Esophagus muscularis mucosa (tissue), 4 donors: ENCODE measurements at regions of chr11 and their contacts with region 1.

Region 1: GRCh38 chr11:12893787-12894672 is 115.1 kb upstream of the RASSF10 start:
- DNase-seq: no peak
- H3K4me3 ChIP-seq: no peak overlapping the region
- H3K27ac ChIP-seq: peak overlapping the region; percentile 20 to 69 (median 48)
- H3K4me1 ChIP-seq: peaks cover 20 to 78% (median 53%) of the 10 kb centered on the region in 4 donors
- H3K27me3 ChIP-seq: no peaks in the 10 kb centered on the region
- CTCF ChIP-seq: peak in 2 of 3 experiments; percentile 96 to 98
- EP300 ChIP-seq: no peak
- POLR2A ChIP-seq: no peak

Region 2: DNA sequence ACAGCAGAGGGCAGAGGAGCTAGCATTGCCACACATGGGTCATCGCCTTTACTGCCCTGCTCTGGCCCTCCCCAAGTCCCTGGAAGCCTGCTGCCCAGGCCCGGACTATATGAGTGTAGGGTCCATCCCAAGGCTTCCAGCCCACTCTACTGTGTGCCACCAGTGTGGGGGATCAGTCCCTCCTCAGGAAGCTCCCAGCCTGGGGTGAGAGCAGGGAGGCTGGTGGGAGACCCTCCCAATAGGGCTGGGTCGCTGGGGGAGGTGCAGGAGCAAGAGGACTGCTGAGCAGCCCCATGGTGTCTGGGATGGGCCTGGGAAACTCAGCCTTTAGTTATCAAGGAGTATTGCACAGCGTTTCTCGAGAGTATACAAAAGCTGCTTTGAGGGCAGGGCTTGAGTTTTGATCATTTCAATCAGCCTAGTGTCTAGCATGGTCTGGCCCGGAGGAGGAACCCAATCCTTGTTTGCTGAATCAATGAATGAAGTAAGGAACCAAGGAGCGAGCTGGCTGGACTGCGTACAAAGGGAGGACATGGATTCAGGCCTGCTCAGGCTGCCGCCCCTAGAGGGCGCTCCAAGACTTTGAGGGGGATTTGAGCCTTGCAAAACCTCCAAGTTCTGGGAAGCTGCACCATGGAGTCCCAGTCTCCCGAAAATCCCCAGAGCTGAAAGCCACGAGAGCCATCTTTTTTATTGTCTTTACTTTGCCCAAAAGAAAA is 605.7 kb before region 1 on chr11:
- intact Hi-C with region 1: loop called (anchors 2 kb)
- DNase-seq: peak; percentile 93
- H3K4me3 ChIP-seq: no peak overlapping the region
- H3K27ac ChIP-seq: peak overlapping the region; percentile 83 to 91 (median 90)
- H3K4me1 ChIP-seq: peaks cover 15 to 43% (median 40%) of the 10 kb centered on the region in 4 donors
- H3K27me3 ChIP-seq: no peaks in the 10 kb centered on the region
- CTCF ChIP-seq: peak; percentile 87 to 94 (median 93)
- EP300 ChIP-seq: no peak
- POLR2A ChIP-seq: no peak

Region 3: GRCh38 chr11:12331239-12331874 is 562.7 kb before region 1 on chr11:
- intact Hi-C with region 1: loop called (anchors 1 kb)
- DNase-seq: no peak
- H3K4me3 ChIP-seq: no peak overlapping the region
- H3K27ac ChIP-seq: peak overlapping the region; percentile 44 to 62 (median 54)
- H3K4me1 ChIP-seq: peaks cover 0 to 42% (median 39%) of the 10 kb centered on the region in 4 donors
- H3K27me3 ChIP-seq: no peaks in the 10 kb centered on the region
- CTCF ChIP-seq: peak; percentile 76 to 87 (median 83)
- EP300 ChIP-seq: no peak
- POLR2A ChIP-seq: no peak

Region 4: DNA sequence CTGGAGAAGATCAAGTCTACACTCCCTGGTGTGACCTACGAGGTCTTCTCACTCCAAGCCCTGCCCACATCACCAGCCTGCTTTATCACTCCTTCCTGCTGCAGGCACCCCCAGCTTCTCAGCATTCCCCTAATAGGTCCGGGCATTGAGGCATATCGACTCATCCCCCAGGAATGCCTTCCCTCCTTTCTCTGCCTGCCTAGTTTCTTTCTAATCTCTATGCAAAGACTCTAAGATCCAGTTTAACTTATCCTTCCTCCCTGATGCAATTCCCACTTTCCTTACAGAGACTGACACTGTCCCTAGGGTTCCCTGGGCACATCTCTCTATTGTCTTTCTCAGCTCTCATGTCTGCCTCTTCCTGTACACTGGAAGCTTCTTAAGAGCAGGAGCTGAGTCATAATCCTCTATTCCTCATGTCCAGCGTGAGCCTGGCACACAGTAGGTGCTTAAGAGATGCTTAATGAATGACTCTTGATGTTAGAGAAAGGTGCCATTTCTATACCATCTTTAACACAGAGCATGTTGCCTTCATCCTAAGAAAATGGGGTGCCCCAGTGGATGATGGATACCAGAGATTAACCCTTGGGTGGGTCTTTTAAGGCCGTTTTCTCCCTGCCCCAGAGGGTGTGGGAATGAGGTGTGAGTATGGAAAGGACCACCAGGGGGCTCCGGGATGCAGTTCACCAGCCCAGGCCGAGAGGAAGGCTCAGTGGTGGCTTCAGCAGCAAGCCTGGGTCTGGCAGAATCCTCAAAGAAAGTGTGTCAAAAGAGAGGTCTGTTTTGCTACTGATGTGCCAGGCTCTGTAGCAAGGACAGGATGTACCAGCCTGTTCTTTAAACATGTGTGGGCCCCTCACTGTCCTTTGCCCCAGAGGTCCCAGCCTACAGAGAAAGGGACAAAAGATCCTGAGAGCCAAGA is 482.0 kb before region 1 on chr11:
- intact Hi-C with region 1: loop called (anchors 5 kb)
- DNase-seq: peak; percentile 92
- H3K4me3 ChIP-seq: no peak overlapping the region
- H3K27ac ChIP-seq: peak overlapping the region; percentile 87 to 100 (median 98)
- H3K4me1 ChIP-seq: peaks cover 77 to 100% (median 99%) of the 10 kb centered on the region in 4 donors
- H3K27me3 ChIP-seq: no peaks in the 10 kb centered on the region
- CTCF ChIP-seq: peak; percentile 73 to 80 (median 80)
- EP300 ChIP-seq: peak; percentile 95
- POLR2A ChIP-seq: no peak

Region 5: DNA sequence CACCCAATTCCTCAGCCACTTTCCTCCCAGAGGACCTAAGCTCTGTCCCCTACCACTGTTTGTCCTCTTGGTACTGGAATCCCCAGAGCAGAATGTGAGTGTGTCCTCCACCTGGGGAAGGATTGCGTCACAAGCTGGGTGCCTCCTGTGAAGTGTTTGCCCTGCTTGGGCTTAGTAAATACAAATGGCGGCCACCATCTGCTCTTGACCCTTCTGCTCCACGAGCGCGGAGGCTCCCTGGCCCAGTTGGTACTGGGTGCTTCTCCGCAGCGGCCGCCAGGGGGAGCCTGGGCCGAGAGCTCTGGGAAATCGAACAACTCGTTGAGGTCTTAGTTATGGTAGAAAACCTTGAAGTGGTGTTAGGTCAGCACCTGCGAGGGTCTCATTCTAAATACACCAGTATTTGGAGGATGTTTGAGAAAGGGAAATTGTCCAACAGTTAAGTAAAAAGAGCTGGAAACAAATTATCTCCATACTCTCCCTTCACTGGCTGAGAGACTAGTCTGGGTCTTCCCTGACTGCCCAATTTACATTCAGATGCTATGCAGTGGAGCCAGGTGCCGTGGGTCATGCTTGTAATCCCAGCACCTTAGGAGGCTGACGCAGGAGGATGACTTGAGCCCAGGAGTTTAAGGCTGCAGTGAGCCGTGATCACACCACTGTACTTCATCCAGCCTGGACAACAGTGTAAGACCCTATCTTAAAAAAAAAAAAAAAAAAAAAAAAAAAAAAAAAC is 294.5 kb before region 1 on chr11:
- intact Hi-C with region 1: loop called (anchors 5 kb)
- DNase-seq: no peak
- H3K4me3 ChIP-seq: no peak overlapping the region
- H3K27ac ChIP-seq: no peak overlapping the region
- H3K4me1 ChIP-seq: peaks cover 0 to 6% (median 0%) of the 10 kb centered on the region in 4 donors
- H3K27me3 ChIP-seq: no peaks in the 10 kb centered on the region
- CTCF ChIP-seq: peak; percentile 59 to 79 (median 68)
- EP300 ChIP-seq: no peak
- POLR2A ChIP-seq: no peak

Region 6: DNA sequence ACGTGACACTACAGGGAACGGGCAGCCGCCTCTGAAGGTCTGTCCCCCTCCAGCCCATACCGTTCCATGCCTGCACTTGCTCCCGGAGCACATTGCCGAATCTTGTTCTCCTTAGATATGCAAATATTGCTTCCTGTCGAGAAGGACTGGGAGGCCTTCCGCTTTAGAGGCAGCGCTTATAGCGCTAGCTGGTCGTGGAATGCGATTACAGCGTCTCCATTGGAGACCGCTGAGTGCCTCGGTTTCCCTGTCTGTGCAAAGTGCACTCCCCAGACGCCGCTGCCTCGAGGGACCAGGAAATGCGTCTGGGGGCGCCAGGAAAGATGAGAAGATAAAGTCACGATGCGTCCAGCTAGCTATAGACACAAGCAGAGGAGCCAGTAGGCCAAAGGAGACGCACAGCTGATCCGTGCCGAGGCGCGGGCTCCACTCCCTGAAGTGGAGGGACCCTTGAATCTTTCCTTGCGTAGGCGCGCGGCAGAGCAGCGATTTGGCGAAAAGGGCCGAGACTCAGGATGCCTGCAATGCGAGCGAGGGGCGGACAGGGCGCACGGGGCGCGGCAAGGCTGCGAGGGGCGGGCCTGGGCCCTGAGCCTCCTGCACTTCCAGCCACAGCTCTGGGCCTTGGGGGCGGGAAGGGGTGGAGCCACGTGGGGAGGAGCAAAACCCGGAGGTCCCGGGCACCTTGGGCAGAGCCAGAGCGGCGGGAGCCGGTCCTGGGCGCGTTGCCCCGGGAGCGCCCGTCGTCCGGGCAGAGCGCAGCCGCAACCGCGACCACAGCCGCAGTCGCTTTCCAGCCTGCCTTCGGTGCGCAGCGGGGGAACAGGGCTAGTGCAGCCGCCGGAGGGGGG is 114.8 kb after region 1 on chr11 and contains the start of gene RASSF10:
- intact Hi-C with region 1: no loop called
- DNase-seq: no peak
- H3K4me3 ChIP-seq: peak within 1 kb of the TSS; percentile 43 to 56 (median 46)
- H3K27ac ChIP-seq: peak within 1 kb of the TSS in 1 of 4 donors; percentile 20
- H3K4me1 ChIP-seq: peaks cover 22 to 31% (median 29%) of the 10 kb centered on the region in 4 donors
- H3K27me3 ChIP-seq: peaks cover 5 to 88% (median 43%) of the 10 kb centered on the region in 4 donors
- CTCF ChIP-seq: no peak
- EP300 ChIP-seq: no peak
- POLR2A ChIP-seq: no peak
- total RNA-seq, gene RASSF10: 0.17 to 0.57 (median 0.19) TPM in 3 of 4 donors, not detected in the other